Right ventricle myocardium inferior (tissue), 1 donor: ENCODE measurements at regions of chr2 and their contacts with region 1.

Region 1: GRCh38 chr2:233242231-233242927 is 9.1 kb upstream of the ATG16L1 start:
- DNase-seq: no peak
- ATAC-seq: peak; percentile 77

Region 2: GRCh38 chr2:233261819-233262555 is 19.6 kb after region 1 on chr2:
- intact Hi-C with region 1: loop called (anchors 2 kb)
- DNase-seq: no peak
- ATAC-seq: no peak

Region 3: GRCh38 chr2:233353769-233354499 is 111.6 kb after region 1 on chr2 and contains the start of gene DGKD:
- intact Hi-C with region 1: no loop called
- DNase-seq: peak; percentile 87
- ATAC-seq: peak; percentile 79
- total RNA-seq, gene DGKD: 29.2 TPM

Region 4: DNA sequence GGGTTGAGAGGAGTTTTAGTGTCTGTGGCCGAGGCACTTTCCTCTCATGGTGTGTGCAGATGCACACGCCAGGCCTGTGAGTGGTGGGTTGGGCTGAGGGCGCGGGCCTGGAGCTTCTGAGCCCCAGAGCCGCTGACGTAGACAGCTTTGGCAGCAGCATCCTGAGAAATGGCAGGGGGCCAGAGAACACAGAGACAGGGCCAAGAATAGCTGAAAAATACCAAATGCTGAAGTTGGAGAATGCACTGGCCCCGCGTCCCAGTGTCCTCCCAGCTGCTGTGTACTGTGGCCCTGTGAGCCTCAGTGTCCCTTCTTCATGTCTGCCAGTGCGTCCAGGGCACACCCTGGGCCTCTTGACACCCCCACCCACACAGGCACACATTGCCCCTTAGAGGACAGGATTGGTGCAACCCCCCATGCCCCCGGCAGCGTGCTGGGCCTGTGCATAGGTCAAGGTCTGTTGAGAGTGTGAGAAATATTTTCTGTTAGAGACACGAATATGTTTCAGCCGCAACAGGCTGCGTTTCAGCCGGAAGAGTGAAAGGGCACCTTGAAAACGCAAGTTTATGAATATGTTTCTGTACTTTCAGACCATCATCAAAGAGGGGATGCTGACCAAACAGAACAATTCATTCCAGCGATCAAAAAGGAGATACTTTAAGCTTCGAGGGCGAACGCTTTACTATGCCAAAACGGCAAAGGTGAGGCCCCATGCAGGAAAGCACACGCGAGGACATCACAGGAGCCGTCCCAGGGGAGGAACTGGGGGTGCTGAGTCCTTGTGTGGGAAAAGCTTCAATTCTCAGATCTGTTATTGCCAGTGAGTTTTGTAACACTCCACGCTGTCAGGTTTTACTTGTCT is 145.5 kb after region 1 on chr2:
- intact Hi-C with region 1: no loop called
- DNase-seq: peak; percentile 92
- ATAC-seq: peak; percentile 95